B cell (primary cell): ENCODE measurements at regions of chr1 and their contacts with region 1.

Region 1: DNA sequence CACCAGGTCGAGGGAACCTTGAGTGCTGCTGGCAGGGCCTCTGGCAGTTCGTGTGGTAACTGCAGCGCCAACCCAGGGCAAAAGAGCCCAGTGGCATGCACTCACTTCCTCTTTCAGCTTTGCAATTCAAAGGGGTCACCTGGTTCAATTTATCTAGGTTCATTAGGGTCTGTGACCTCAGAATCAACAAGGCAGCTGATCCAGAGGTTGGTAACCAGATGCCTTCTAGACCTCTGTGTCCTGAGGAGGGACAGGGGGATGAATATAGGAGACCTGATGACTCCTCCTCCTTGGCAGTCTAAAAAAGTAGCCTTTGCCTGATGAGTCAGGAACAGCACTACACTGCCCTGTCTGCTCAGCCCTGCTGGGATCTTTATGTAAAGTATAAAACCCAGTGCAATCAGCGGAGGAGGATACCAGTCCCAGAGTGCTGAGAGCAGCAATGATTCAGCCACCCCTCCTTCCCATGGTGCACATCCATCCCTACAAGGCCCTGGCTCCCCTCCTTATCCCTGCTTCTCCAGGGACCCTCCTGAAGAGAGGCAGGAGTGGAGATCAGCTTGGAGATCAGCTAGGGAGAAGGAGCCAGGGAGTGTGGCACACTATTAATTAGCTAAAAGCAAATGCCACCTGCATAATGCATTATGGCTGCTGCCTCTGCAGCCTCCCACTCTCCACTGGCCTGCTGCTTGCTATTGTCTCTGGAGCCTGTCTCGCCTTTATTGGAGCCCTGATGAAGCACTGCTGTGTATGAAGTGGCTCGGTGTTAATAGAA is 11.2 kb upstream of the FMOD start:
- DNase-seq: peak; percentile 72
- ATAC-seq: peak; percentile 93
- H3K4me3 ChIP-seq: no peak overlapping the region
- H3K4me3 Mint-ChIP-seq: no peak overlapping the region
- H3K27ac ChIP-seq: no peak overlapping the region
- H3K27ac Mint-ChIP-seq: peak overlapping the region; percentile 41
- H3K4me1 ChIP-seq: peaks cover 18 to 19% of the 10 kb centered on the region in 2 donors
- H3K4me1 Mint-ChIP-seq: peaks cover 20% of the 10 kb centered on the region
- H3K27me3 ChIP-seq: peaks cover 0 to 6% (median 0%) of the 10 kb centered on the region in 4 experiments
- H3K27me3 Mint-ChIP-seq: peaks cover 19% of the 10 kb centered on the region
- CTCF ChIP-seq: no peak

Region 2: GRCh38 chr1:203428981-203429599 is 67.0 kb after region 1 on chr1:
- CTCF ChIA-PET with region 1: no interaction called
- POLR2A ChIA-PET with region 1: no interaction called
- intact Hi-C with region 1: loop called (anchors 5 kb)
- DNase-seq: no peak
- ATAC-seq: no peak
- H3K4me3 ChIP-seq: no peak overlapping the region
- H3K4me3 Mint-ChIP-seq: no peak overlapping the region
- H3K27ac ChIP-seq: no peak overlapping the region
- H3K27ac Mint-ChIP-seq: no peak overlapping the region
- H3K4me1 ChIP-seq: peaks cover 0 to 3% of the 10 kb centered on the region in 2 donors
- H3K4me1 Mint-ChIP-seq: peaks cover 13% of the 10 kb centered on the region
- H3K27me3 ChIP-seq: peaks cover 0 to 9% (median 0%) of the 10 kb centered on the region in 4 experiments
- H3K27me3 Mint-ChIP-seq: peaks cover 53% of the 10 kb centered on the region
- CTCF ChIP-seq: no peak